ENCODE measurements at regions of chr2 and their contacts with region 1.

Region 1: DNA sequence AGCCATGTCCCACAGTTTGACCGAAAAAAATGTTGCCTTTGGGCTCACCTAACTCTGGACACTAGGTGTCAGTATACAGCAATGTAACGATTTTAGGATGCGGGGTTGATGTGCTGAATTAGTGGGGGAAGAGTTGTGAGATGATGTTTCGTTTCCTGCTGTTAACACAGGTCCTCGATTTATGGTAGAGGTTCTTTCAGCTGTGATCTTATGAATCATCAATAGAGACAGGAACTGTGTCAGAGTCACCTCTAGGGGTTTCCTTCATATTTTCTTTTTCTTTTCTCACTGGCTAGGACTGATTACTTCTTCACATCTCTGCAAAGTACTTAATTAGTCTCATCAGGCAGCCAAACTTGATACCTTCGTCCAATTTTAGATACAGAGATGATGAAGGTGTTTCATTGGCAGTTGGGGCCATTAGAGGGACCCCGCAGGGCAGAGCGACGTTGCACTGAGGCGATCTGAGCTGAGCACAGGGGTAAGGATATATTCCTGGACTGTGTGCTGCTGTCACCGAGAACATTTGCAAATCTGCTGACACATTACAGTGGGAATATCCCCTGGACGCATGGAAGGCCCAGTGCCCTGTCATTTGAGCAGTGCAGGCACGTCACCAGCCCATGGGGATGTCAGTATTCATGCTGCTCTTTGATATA is 10.2 kb upstream of the MMADHC start:
- DNase-seq: no peak
- ATAC-seq: peak; percentile 92

Region 2: DNA sequence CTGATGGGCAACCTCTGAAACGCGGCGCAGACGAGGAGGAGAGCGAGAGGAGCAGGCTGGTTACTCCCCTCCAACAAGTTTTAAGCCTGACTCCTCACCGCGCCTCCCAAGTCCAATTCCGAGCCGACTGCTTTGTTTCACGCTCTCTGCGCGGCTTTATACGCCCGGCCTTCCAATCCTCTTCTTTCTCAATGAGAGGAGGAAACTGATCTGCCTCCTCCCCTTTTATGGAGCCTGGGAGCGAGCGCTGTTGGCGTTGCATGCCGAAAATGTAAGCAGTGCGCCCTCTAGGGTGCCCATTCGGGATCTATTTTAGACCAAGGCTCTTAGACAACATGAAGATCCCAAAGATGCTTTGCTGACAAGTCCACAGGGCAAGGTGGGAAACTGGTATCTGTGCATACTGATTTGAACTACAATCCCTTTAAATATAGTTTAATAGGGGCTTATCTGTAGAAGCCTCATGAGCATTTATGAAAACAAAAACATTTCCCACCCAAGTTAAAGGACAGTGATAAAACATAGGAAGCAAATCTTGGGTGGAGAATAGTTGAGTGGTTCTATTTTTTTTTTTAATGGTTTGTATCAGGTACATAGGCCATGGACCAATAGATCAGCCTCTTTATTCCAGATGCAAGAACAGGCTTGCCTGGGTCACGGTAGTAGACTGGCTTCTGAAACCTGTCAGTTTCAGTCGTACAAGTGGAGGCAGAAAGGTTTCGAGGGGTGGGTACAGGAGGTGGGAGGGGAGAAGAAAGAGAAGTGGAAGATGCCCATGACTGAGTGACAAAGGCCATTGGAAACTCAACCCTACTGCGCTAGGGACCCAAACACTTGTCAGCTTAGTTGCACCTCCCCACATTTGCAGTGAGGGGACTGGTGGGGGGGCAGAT is 890.0 kb after region 1 on chr2 and contains the start of gene RND3:
- intact Hi-C with region 1: loop called (anchors 5 kb)
- DNase-seq: peak; percentile 96
- ATAC-seq: peak; percentile 66
- total RNA-seq, gene RND3: 25.1 TPM

Region 3: GRCh38 chr2:151241224-151241623 is 1643.4 kb after region 1 on chr2:
- intact Hi-C with region 1: loop called (anchors 5 kb)
- DNase-seq: no peak
- ATAC-seq: no peak